ENCODE measurements at regions of chr17 and their contacts with region 1.

Region 1: GRCh38 chr17:39621523-39622379 is 5.0 kb upstream of the PPP1R1B start:
- DNase-seq: peak; percentile 90
- CTCF ChIP-seq: peak; percentile 100

Region 2: GRCh38 chr17:39563476-39563875 is 58.3 kb before region 1 on chr17:
- CTCF ChIA-PET with region 1: interaction called, 16 read pairs
- POLR2A ChIA-PET with region 1: no interaction called
- DNase-seq: no peak
- CTCF ChIP-seq: no peak

Region 3: GRCh38 chr17:39605492-39606433 is 16.0 kb before region 1 on chr17:
- CTCF ChIA-PET with region 1: interaction called, 50 read pairs
- POLR2A ChIA-PET with region 1: no interaction called
- DNase-seq: no peak
- CTCF ChIP-seq: no peak

Region 4: DNA sequence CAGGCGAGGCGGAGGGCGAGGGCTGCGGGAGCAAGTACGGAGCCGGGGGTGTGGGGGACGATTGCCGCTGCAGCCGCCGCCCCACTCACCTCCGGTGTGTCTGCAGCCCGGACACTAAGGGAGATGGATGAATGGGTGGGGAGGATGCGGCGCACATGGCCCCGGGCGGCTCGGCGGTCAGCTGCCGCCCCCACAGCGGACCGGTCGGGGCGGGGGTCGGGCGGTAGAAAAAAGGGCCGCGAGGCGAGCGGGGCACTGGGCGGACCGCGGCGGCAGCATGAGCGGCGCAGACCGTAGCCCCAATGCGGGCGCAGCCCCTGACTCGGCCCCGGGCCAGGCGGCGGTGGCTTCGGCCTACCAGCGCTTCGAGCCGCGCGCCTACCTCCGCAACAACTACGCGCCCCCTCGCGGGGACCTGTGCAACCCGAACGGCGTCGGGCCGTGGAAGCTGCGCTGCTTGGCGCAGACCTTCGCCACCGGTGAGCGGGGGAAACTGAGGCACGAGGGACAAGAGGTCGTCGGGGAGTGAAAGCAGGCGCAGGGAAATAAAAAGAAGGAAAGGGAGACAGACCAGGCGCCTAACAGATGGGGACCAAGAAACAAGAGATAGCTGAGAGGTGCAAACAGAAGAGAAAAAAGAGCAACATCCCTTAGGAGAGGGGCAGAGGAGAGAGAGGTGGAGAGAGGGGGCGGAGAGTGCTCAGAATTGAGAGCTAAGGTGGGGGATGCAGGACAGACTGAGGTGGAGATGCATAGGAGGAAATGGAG is 46.6 kb after region 1 on chr17 and contains the start of gene PNMT:
- CTCF ChIA-PET with region 1: interaction called, 134 read pairs
- POLR2A ChIA-PET with region 1: no interaction called
- DNase-seq: peak; percentile 80
- CTCF ChIP-seq: peak; percentile 89

Region 5: DNA sequence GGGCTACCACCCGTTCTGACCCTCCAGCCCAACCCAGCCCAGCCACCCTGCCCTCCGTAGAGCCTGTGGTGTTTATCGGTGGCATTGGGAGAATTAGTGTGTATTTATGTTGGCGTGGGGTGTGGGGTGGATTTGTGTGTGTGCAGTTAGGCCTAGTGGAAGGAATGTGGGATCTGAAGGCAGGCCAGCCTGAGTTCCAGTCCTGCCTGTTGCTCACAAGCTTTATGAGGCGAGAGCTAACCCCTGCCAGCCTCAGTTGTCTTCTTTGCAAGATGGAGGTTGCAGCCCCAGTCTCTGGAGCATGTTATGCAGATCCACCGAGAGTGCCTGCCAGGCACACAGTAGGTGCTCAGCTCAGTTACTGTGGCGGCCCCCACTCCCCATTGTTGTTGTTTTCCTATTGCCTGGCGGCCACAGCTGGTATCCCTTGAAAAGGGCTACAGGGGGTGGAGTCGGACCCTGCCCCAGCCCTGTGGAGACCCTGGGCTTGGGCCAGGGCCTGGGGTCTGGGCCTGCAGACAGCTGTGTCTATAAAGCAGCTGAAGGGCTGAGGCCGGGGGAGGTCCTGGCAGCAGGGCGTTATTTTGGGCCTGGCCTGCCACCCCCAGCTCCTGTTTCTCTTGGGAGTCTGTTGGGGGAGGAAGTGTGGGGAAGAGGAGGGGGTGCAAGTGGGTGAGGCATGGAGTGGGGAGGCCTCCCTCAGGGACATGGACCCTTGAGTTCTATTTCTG is 83.2 kb after region 1 on chr17:
- CTCF ChIA-PET with region 1: interaction called, 13 read pairs
- POLR2A ChIA-PET with region 1: no interaction called
- DNase-seq: no peak
- CTCF ChIP-seq: no peak

Region 6: GRCh38 chr17:39894681-39895376 is 273.1 kb after region 1 on chr17:
- CTCF ChIA-PET with region 1: interaction called, 16 read pairs
- POLR2A ChIA-PET with region 1: no interaction called
- DNase-seq: no peak
- CTCF ChIP-seq: no peak

Measured in GM10248 (cell line).